ENCODE measurements at regions of chr4 and their contacts with region 1.

Region 1: DNA sequence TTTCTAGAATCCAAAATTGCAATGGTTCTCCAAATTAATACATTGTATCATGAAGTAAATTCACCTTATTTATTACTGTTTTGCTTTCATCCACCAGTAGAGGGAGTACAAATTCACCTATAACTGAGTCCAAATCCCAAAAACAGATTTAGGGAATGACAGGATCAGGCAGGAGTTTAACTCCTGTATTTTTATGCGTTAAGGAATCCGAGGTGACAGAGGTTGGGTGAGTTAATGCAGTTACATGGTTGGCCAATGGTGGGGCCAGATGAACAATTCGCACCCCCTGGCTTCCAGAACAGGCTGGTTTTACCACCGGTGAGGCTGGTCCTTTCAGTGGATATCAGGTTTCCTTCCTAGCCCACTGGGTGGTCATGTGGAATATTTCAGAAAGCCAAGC is 82.4 kb downstream of the MTNR1A start:
- DNase-seq: no peak
- H3K4me3 Mint-ChIP-seq: no peak overlapping the region
- H3K27ac Mint-ChIP-seq: no peak overlapping the region
- H3K4me1 Mint-ChIP-seq: no peaks in the 10 kb centered on the region
- H3K27me3 Mint-ChIP-seq: peaks cover 13% of the 10 kb centered on the region
- CTCF ChIP-seq: peak; percentile 30

Region 2: DNA sequence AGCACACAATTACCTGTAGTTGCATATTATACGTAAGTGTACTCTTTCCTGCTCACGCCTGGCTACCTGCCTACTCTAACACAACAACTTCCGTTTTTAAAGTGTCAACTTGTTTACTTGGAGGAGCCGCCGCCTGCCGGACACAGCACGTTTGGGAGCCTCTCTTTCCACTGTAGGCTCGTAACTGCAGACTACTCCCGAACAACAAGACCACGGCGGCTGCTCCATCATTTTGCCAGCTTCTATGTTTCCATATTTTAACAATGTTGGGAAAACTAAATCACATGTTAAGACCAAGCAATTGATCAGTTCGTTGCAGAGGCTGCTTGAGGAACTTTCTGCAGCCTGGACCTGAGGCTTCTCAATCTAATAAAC is 81.6 kb after region 1 on chr4:
- CTCF ChIA-PET with region 1: no interaction called
- intact Hi-C with region 1: loop called (anchors 1 kb)
- DNase-seq: peak; percentile 42
- H3K4me3 Mint-ChIP-seq: peak overlapping the region; percentile 76
- H3K27ac Mint-ChIP-seq: peak overlapping the region; percentile 36
- H3K4me1 Mint-ChIP-seq: no peaks in the 10 kb centered on the region
- H3K27me3 Mint-ChIP-seq: no peaks in the 10 kb centered on the region
- CTCF ChIP-seq: no peak

Region 3: DNA sequence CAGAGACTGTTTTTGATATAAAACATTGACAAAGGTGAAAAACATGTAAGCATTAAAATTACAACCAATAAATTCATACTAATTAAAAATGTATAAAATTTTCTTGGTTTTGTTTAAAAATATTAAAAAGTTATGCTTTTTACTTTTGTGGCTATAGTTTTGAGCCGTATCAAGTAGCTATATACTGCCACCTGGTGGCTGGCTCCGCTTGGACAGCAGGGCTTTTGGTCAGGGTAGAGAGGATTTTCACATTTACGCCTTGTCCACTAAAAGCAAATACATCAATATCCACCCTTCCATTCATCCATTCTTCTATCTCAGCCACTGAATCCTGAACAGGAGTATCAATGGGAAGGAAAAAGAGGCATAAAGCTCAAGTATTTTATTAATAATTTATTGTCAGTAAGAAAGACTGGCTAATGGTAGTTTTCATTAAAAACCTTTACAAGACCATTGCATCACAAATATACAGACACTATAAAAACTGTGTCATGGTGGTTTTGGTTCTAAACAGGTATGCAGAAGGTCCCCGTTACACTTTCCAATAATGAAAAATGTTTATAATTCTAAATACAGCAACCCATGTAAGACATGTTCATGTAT is 114.6 kb after region 1 on chr4:
- CTCF ChIA-PET with region 1: interaction called, 7 read pairs
- intact Hi-C with region 1: loop called (anchors 2 kb)
- DNase-seq: peak; percentile 70
- H3K4me3 Mint-ChIP-seq: no peak overlapping the region
- H3K27ac Mint-ChIP-seq: no peak overlapping the region
- H3K4me1 Mint-ChIP-seq: no peaks in the 10 kb centered on the region
- H3K27me3 Mint-ChIP-seq: no peaks in the 10 kb centered on the region
- CTCF ChIP-seq: peak; percentile 63